MCF 10A (cell line): ENCODE measurements at regions of chr2 and their contacts with region 1.

Region 1: GRCh38 chr2:50529600-50530218 is 502.2 kb downstream of the NRXN1 start:
- DNase-seq: peak; percentile 68
- H3K4me3 Mint-ChIP-seq: no peak overlapping the region
- H3K27ac Mint-ChIP-seq: no peak overlapping the region
- H3K4me1 Mint-ChIP-seq: peaks cover 6% of the 10 kb centered on the region
- H3K27me3 Mint-ChIP-seq: no peaks in the 10 kb centered on the region
- CTCF ChIP-seq: peak; percentile 67

Region 2: GRCh38 chr2:50484371-50484770 is 45.3 kb before region 1 on chr2:
- CTCF ChIA-PET with region 1: no interaction called
- POLR2A ChIA-PET with region 1: no interaction called
- intact Hi-C with region 1: no loop called
- DNase-seq: no peak
- H3K4me3 Mint-ChIP-seq: no peak overlapping the region
- H3K27ac Mint-ChIP-seq: no peak overlapping the region
- H3K4me1 Mint-ChIP-seq: no peaks in the 10 kb centered on the region
- H3K27me3 Mint-ChIP-seq: peaks cover 3% of the 10 kb centered on the region
- CTCF ChIP-seq: no peak

Region 3: GRCh38 chr2:50674876-50675275 is 145.2 kb after region 1 on chr2:
- CTCF ChIA-PET with region 1: no interaction called
- POLR2A ChIA-PET with region 1: no interaction called
- intact Hi-C with region 1: loop called (anchors 10 kb)
- DNase-seq: peak; percentile 34
- H3K4me3 Mint-ChIP-seq: no peak overlapping the region
- H3K27ac Mint-ChIP-seq: no peak overlapping the region
- H3K4me1 Mint-ChIP-seq: no peaks in the 10 kb centered on the region
- H3K27me3 Mint-ChIP-seq: no peaks in the 10 kb centered on the region
- CTCF ChIP-seq: peak; percentile 24

Region 4: DNA sequence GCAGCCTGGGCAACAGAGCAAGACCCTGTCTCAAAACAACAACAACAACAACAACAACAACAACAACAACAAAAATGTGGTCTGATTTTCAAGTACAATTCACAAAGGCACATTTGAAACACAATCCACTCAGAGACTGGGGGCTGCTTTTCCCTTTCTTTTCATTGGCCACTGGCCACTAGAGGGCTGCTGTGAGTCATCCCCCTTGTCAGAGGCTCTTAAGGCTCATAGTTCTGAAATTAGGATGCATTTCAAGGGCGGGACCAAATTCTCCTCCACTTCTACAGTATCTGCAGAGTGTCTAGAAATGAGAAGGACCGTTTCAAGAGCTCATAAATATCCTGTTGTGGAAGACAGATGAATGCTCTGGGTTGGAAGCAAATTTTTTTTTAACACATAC is 216.8 kb after region 1 on chr2:
- CTCF ChIA-PET with region 1: interaction called, 4 read pairs
- POLR2A ChIA-PET with region 1: no interaction called
- intact Hi-C with region 1: loop called (anchors 5 kb)
- DNase-seq: peak; percentile 53
- H3K4me3 Mint-ChIP-seq: no peak overlapping the region
- H3K27ac Mint-ChIP-seq: no peak overlapping the region
- H3K4me1 Mint-ChIP-seq: no peaks in the 10 kb centered on the region
- H3K27me3 Mint-ChIP-seq: no peaks in the 10 kb centered on the region
- CTCF ChIP-seq: peak; percentile 48

Region 5: GRCh38 chr2:51710222-51710621 is 1180.5 kb after region 1 on chr2:
- CTCF ChIA-PET with region 1: interaction called, 4 read pairs
- POLR2A ChIA-PET with region 1: no interaction called
- intact Hi-C with region 1: loop called (anchors 5 kb)
- DNase-seq: peak; percentile 20
- H3K4me3 Mint-ChIP-seq: no peak overlapping the region
- H3K27ac Mint-ChIP-seq: no peak overlapping the region
- H3K4me1 Mint-ChIP-seq: no peaks in the 10 kb centered on the region
- H3K27me3 Mint-ChIP-seq: no peaks in the 10 kb centered on the region
- CTCF ChIP-seq: peak; percentile 42